ENCODE measurements at regions of chr22 and their contacts with region 1.

Region 1: GRCh38 chr22:33000342-33001280 is 57.6 kb downstream of the SYN3 start:
- DNase-seq: peak; percentile 66 to 89 (median 88)
- ATAC-seq: peak; percentile 72 to 73
- H3K4me3 ChIP-seq: no peak overlapping the region
- H3K27ac ChIP-seq: no peak overlapping the region
- H3K4me1 ChIP-seq: peaks cover 2% of the 10 kb centered on the region
- H3K27me3 ChIP-seq: no peaks in the 10 kb centered on the region

Region 2: DNA sequence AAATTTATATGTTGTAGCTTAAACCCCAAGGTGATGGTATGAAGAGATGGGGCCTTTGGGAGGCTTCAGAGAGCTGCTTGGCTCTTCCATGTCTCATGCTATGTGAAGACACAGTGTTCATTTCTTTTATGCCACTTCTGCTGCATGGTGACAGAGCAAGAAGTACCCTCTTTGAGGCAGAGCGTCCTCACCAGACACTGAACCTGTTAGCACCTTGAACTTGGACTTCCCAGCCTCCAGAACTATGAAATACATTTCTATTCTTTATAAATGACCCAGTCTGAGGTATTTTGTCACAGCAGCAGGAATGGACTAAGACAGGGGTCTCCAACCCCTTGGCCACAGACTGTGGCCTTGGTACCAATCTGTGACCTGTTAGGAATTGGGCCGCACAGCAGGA is 345.5 kb before region 1 on chr22:
- intact Hi-C with region 1: loop called (anchors 5 to 10 kb)
- DNase-seq: no peak
- ATAC-seq: no peak
- H3K4me3 ChIP-seq: no peak overlapping the region
- H3K27ac ChIP-seq: no peak overlapping the region
- H3K4me1 ChIP-seq: no peaks in the 10 kb centered on the region
- H3K27me3 ChIP-seq: no peaks in the 10 kb centered on the region

Region 3: GRCh38 chr22:32660292-32660691 is 340.3 kb before region 1 on chr22:
- intact Hi-C with region 1: loop called (anchors 5 to 10 kb)
- DNase-seq: peak; percentile 66 to 90 (median 84)
- ATAC-seq: peak; percentile 71 to 73
- H3K4me3 ChIP-seq: no peak overlapping the region
- H3K27ac ChIP-seq: no peak overlapping the region
- H3K4me1 ChIP-seq: peaks cover 6% of the 10 kb centered on the region
- H3K27me3 ChIP-seq: no peaks in the 10 kb centered on the region

Region 4: DNA sequence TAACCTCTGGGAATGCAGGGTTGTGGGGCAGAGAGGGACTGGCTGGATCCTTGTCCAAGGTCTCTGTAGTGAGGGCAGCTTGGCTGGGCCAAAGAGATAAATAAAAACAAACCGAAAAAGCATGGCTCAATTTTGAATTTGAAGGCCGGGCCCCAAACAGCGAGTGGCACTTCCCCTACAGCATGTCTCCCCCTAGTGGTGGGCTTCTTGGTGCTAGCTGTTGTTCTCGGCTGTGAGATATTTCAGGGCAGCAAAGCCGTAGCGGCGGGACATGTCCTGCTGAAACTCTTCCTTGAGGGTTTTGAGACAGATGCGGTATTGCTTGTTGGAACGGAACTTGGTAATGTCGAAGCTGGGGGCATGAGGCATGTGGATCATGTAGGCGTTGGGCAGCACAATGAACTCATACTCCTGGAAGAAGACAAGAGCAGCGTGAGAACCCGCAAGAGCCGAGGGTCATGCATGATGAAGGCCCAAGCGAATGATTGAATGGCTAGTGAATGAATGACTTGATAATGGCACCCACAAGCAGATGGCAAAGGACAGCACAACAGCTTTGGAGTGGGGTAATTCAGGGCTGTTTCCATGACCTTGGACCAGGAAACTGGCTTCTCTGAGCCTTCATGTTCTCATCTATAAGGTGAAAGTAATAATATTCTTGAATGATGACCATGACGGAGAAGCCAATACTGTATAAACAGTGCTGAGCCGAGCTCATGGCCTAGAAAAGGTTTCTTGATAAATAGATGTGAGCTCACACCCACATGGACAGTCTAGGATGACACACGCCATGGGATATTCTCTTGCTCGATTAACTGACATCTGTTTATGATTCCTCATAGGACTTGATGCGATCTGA is 273.8 kb after region 1 on chr22:
- intact Hi-C with region 1: no loop called
- DNase-seq: peak in 1 of 3 donors; percentile 18
- ATAC-seq: no peak
- H3K4me3 ChIP-seq: no peak overlapping the region
- H3K27ac ChIP-seq: no peak overlapping the region
- H3K4me1 ChIP-seq: no peaks in the 10 kb centered on the region
- H3K27me3 ChIP-seq: no peaks in the 10 kb centered on the region

Measured in right cardiac atrium (tissue), 5 donors.